ENCODE measurements at regions of chr2 and their contacts with region 1.

Region 1: GRCh38 chr2:169933124-169933711 is 106.0 kb downstream of the UBR3 start:
- DNase-seq: no peak
- H3K4me3 Mint-ChIP-seq: no peak overlapping the region
- H3K27ac Mint-ChIP-seq: no peak overlapping the region
- H3K4me1 Mint-ChIP-seq: no peaks in the 10 kb centered on the region
- H3K27me3 Mint-ChIP-seq: no peaks in the 10 kb centered on the region

Region 2: DNA sequence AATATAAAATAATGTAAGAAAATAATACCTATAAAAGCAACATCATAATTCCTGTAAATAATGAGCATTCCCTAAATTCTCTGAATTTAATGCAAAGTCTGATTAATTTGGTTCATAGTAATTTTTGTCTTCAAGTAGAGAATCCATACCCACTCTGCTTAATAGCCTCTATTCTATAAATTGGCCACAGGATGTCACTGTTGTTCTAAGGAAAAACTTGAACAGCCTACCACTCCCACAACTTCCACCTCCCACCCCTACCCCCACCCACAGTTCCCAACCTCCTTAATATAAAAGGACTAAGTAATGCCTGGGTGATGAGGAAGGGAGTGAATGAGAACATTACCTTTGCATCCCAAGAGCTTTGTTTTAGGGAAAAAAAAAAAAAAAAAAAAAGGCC is 481.1 kb before region 1 on chr2:
- CTCF ChIA-PET with region 1: interaction called, 3 read pairs
- intact Hi-C with region 1: loop called (anchors 1 kb)
- DNase-seq: no peak
- H3K4me3 Mint-ChIP-seq: no peak overlapping the region
- H3K27ac Mint-ChIP-seq: no peak overlapping the region
- H3K4me1 Mint-ChIP-seq: no peaks in the 10 kb centered on the region
- H3K27me3 Mint-ChIP-seq: peaks cover 3% of the 10 kb centered on the region

Region 3: GRCh38 chr2:169528271-169528701 is 404.9 kb before region 1 on chr2:
- CTCF ChIA-PET with region 1: interaction called, 3 read pairs
- intact Hi-C with region 1: loop called (anchors 1 kb)
- DNase-seq: peak; percentile 86
- H3K4me3 Mint-ChIP-seq: no peak overlapping the region
- H3K27ac Mint-ChIP-seq: no peak overlapping the region
- H3K4me1 Mint-ChIP-seq: no peaks in the 10 kb centered on the region
- H3K27me3 Mint-ChIP-seq: no peaks in the 10 kb centered on the region

Region 4: GRCh38 chr2:169637620-169638019 is 295.6 kb before region 1 on chr2:
- CTCF ChIA-PET with region 1: no interaction called
- intact Hi-C with region 1: loop called (anchors 10 kb)
- DNase-seq: no peak
- H3K4me3 Mint-ChIP-seq: no peak overlapping the region
- H3K27ac Mint-ChIP-seq: no peak overlapping the region
- H3K4me1 Mint-ChIP-seq: no peaks in the 10 kb centered on the region
- H3K27me3 Mint-ChIP-seq: no peaks in the 10 kb centered on the region

Region 5: DNA sequence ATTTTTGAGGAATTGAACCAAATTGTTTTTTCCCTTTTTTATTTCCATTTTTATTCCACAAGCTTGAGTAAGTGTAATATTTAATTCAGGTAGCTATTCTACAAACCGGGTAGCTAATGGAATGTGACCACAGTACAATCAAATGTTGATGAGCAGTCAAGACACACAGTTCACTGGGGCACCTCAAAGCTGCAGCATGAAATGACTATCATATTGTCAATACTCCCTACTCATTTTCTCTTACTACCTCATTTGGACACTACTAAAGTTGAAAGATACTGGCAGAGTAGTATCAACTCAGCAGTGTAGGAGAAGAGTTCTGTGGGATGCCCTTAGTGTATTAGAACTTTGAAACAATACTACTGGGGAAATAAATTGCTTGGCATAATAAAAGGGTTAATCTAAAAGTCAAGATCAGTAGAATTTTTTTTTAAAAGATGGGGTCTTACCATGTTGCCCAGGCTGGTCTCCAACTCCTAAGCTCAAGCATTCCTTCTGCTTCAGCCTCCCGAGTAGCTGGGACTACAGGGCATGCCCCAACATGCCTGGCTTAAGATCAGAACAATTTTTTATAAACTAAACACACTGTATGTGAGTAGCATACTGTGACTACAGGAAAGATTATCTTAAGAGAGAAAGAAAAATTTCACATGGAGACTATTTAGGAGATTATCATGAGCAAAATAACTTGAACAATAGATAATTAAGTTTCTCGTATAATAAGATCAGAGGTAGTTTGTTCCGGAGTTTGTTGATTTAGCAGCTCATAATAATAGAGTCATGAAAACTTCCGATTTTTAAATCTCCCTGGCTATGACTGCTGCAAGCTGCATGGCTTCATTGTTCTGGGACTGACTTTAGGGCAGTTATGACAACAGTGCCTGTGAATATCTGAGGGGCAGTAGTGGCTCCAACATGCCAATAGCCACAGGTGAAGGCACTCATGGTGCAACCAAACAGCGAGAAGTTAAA is 288.4 kb after region 1 on chr2:
- CTCF ChIA-PET with region 1: no interaction called
- intact Hi-C with region 1: loop called (anchors 10 kb)
- DNase-seq: no peak
- H3K4me3 Mint-ChIP-seq: no peak overlapping the region
- H3K27ac Mint-ChIP-seq: no peak overlapping the region
- H3K4me1 Mint-ChIP-seq: no peaks in the 10 kb centered on the region
- H3K27me3 Mint-ChIP-seq: peaks cover 4% of the 10 kb centered on the region

Region 6: GRCh38 chr2:170361090-170361936 is 428.1 kb after region 1 on chr2:
- CTCF ChIA-PET with region 1: no interaction called
- intact Hi-C with region 1: loop called (anchors 5 kb)
- DNase-seq: peak; percentile 77
- H3K4me3 Mint-ChIP-seq: no peak overlapping the region
- H3K27ac Mint-ChIP-seq: no peak overlapping the region
- H3K4me1 Mint-ChIP-seq: peaks cover 28% of the 10 kb centered on the region
- H3K27me3 Mint-ChIP-seq: peaks cover 6% of the 10 kb centered on the region

Region 7: GRCh38 chr2:170455617-170456426 is 522.6 kb after region 1 on chr2:
- CTCF ChIA-PET with region 1: no interaction called
- intact Hi-C with region 1: no loop called
- DNase-seq: no peak
- H3K4me3 Mint-ChIP-seq: no peak overlapping the region
- H3K27ac Mint-ChIP-seq: no peak overlapping the region
- H3K4me1 Mint-ChIP-seq: no peaks in the 10 kb centered on the region
- H3K27me3 Mint-ChIP-seq: peaks cover 2% of the 10 kb centered on the region

Measured in activated naive CD4-positive, alpha-beta T cell treated with anti-CD3 and anti-CD28 coated beads for 36 hours (primary cell).